Activated CD8-positive, alpha-beta T cell treated with anti-CD3 and anti-CD28 coated beads for 36 hours (primary cell): ENCODE measurements at regions of chr6 and their contacts with region 1.

Region 1: DNA sequence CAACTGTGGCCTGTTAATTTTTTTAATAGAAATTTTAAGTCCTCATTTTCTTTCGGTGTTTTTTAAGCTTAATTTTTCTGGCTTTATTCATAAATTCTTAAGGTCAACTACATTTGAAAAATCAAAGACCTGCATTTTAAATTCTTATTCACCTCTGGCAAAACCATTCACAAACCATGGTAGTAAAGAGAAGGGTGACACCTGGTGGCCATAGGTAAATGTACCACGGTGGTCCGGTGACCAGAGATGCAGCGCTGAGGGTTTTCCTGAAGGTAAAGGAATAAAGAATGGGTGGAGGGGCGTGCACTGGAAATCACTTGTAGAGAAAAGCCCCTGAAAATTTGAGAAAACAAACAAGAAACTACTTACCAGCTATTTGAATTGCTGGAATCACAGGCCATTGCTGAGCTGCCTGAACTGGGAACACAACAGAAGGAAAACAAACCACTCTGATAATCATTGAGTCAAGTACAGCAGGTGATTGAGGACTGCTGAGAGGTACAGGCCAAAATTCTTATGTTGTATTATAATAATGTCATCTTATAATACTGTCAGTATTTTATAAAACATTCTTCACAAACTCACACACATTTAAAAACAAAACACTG is 10.1 kb downstream of the HFE start:
- DNase-seq: peak; percentile 77
- ATAC-seq: peak; percentile 89
- H3K4me3 Mint-ChIP-seq: no peak overlapping the region
- H3K27ac Mint-ChIP-seq: no peak overlapping the region
- H3K4me1 Mint-ChIP-seq: peaks cover 4% of the 10 kb centered on the region
- H3K27me3 Mint-ChIP-seq: no peaks in the 10 kb centered on the region
- CTCF ChIP-seq: peak; percentile 82

Region 2: DNA sequence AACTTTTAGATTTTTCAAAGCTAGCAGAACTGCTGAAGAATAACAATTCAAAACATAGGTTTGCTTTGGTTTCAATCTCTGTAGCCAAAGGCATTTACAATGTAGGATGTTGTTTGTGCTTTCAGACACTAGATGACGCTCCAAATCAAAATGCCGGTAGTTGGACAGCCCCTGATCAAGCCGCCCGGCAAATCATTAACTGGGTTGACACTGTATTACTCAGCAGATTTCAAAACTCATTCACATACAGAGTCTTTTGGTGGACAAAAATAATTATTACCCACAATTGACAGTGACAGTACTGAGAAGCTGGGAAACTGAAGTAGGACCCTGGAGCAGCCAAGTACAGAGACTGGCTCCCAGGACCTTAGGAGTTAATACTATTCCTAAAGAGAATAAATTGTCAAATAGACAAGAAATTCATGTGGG is 31.4 kb before region 1 on chr6:
- CTCF ChIA-PET with region 1: interaction called, 841 read pairs
- POLR2A ChIA-PET with region 1: interaction called, 103 read pairs
- intact Hi-C with region 1: loop called (anchors 1 kb)
- DNase-seq: peak; percentile 73
- ATAC-seq: peak; percentile 95
- H3K4me3 Mint-ChIP-seq: no peak overlapping the region
- H3K27ac Mint-ChIP-seq: no peak overlapping the region
- H3K4me1 Mint-ChIP-seq: no peaks in the 10 kb centered on the region
- H3K27me3 Mint-ChIP-seq: no peaks in the 10 kb centered on the region
- CTCF ChIP-seq: peak; percentile 79